ENCODE measurements at regions of chr11 and their contacts with region 1.

Region 1: DNA sequence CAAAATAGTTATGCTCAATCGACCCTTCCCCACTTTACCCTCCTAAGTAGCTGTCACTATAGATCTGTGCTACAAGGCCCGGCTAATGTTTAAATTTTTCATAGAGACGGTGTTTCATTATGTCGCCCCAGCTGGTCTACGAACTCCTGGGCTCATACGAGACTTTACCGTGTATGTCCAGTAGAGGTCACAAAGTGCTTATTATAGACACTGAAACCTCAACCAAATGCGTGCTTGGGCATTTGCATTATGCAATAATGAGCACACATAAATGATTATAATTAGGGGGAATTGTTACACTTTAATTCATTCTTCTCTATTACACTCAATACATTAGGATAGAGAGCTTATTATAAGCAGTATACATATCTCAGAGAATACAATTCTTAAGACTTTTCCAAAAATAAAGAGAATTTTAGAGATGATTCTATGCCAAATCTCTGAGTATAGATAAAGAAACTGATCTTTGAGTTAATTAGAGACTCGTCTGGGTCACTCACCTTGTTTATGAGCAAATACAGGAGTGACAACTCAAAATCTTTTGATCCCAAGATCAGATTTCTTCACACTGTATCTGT is 12.5 kb upstream of the MRPL16 start:
- DNase-seq: peak; percentile 37 to 62
- H3K4me3 ChIP-seq: no peak overlapping the region
- H3K27ac ChIP-seq: no peak overlapping the region
- H3K4me1 ChIP-seq: no peaks in the 10 kb centered on the region
- H3K27me3 ChIP-seq: no peaks in the 10 kb centered on the region
- CTCF ChIP-seq: peak; percentile 85

Region 2: DNA sequence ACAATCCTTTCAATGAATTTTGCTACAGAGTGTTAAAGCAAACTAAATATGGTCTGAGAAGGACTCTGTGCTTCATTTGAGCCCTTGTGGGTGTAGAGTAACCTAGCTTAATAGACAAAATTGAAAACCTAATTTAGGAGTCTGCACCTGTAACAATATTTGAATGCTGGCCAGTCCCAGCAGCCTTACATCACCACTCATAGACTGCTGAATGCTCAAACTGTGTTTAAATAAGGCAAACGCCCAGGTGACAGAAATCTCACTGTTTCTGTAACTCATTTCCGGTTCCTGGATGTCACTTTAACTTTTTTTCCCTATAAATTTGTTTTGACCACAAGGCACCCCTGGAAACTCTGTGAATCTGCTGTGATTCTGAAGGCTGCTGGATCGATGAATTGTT is 782.5 kb before region 1 on chr11:
- CTCF ChIA-PET with region 1: no interaction called
- POLR2A ChIA-PET with region 1: no interaction called
- intact Hi-C with region 1: loop called (anchors 5 kb)
- DNase-seq: no peak
- H3K4me3 ChIP-seq: no peak overlapping the region
- H3K27ac ChIP-seq: no peak overlapping the region
- H3K4me1 ChIP-seq: no peaks in the 10 kb centered on the region
- H3K27me3 ChIP-seq: peaks cover 24% of the 10 kb centered on the region
- CTCF ChIP-seq: no peak

Region 3: GRCh38 chr11:59746111-59746510 is 77.0 kb before region 1 on chr11:
- CTCF ChIA-PET with region 1: no interaction called
- POLR2A ChIA-PET with region 1: no interaction called
- intact Hi-C with region 1: no loop called
- DNase-seq: no peak
- H3K4me3 ChIP-seq: no peak overlapping the region
- H3K27ac ChIP-seq: no peak overlapping the region
- H3K4me1 ChIP-seq: no peaks in the 10 kb centered on the region
- H3K27me3 ChIP-seq: no peaks in the 10 kb centered on the region; the same call in 1 of the 2 replicates
- CTCF ChIP-seq: no peak

Region 4: GRCh38 chr11:59918987-59919589 is 96.0 kb after region 1 on chr11:
- CTCF ChIA-PET with region 1: interaction called, 11 read pairs
- POLR2A ChIA-PET with region 1: no interaction called
- intact Hi-C with region 1: loop called (anchors 1 kb)
- DNase-seq: peak; percentile 46 to 60
- H3K4me3 ChIP-seq: no peak overlapping the region
- H3K27ac ChIP-seq: no peak overlapping the region
- H3K4me1 ChIP-seq: no peaks in the 10 kb centered on the region
- H3K27me3 ChIP-seq: no peaks in the 10 kb centered on the region
- CTCF ChIP-seq: peak; percentile 78

Region 5: DNA sequence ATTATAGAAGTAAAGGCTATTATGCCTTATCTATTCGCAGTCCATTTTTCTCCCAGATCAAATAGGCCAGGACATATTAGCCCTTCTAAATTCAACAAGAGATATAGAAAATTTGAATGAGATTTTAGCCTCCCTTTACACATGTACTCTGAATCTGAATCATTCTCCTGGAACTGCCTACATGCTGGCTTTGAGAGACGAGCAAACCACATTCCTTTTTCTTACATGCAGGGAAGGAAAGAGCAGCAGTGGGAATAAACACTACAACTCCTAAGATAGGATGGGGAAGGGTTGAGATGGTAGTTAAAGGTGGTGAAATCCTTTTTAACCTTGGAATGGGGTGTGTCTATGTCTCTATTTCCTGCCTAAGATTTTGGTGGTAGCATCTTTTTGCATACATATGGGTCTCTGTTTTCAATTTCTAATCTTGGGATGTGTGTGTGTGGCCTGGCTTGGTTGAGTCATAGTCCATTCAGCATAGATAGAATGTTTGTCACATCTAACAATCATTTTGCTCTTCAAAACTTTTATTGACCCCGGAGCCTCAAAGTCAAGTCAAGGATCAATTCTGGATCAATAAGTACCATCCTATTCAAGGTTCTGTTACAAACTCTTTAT is 206.0 kb after region 1 on chr11:
- CTCF ChIA-PET with region 1: no interaction called
- POLR2A ChIA-PET with region 1: no interaction called
- intact Hi-C with region 1: loop called (anchors 10 kb)
- DNase-seq: no peak
- H3K4me3 ChIP-seq: no peak overlapping the region
- H3K27ac ChIP-seq: no peak overlapping the region
- H3K4me1 ChIP-seq: no peaks in the 10 kb centered on the region
- H3K27me3 ChIP-seq: peaks cover under 1% of the 10 kb centered on the region; the same call in 1 of the 2 replicates
- CTCF ChIP-seq: no peak

Region 6: DNA sequence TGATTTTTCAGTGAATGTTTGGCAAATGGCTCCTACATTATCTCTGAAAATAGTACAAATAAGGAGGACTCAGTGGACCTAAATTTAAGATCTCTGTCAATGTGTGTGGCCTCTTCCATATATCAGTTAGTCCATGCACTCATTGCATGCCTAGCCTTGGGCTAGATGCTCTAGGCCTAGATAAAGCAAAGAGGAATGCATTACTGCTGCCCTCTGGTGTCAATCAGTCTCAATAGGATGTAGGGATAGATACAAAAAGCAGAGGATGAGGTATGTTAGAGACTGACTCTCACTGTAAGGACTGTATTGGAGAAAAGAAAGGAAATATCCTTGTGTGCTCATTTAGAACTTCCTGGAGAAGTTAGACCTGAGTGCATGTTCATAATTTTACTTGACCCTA is 307.4 kb after region 1 on chr11:
- CTCF ChIA-PET with region 1: no interaction called
- POLR2A ChIA-PET with region 1: no interaction called
- intact Hi-C with region 1: loop called (anchors 1 kb)
- DNase-seq: peak in 1 of 2 experiments; percentile 45
- H3K4me3 ChIP-seq: no peak overlapping the region
- H3K27ac ChIP-seq: no peak overlapping the region
- H3K4me1 ChIP-seq: no peaks in the 10 kb centered on the region; the same call in 1 of the 2 replicates
- H3K27me3 ChIP-seq: no peaks in the 10 kb centered on the region
- CTCF ChIP-seq: peak; percentile 56

Region 7: DNA sequence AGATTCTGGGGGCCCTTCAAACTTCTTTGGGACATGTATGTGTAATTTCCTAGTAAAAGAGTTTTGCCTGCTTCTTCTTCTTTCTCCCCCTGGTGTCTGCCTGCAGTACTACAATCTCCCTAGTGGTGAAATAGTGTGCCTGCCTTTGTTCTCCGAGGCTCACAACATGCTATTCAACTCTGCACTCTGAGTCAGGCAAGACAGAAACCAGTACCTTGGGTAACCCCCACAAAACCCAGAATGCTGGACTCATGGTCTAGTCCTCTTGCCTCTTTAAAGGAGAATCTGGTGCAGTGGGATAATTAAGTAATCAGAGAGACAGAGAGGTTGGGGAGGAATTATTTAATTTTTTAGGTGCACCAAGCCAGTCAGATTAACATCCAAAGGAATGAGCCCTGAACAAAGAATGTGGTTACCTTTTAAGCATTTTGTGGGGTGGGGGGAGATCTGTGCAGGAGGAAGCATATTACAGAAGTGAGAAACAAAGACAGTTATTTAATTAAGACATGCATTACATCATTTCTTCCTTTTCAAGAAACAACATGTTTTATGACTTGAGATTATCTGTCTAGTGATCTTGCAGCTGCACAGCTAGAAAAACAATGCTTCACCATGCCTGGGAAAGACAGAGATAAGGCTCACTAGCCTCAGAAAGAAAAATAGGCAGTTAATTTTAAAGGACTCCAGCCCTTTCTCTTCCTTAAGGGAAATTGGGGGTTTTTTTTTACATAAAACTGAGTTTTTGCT is 370.8 kb after region 1 on chr11:
- CTCF ChIA-PET with region 1: no interaction called
- POLR2A ChIA-PET with region 1: no interaction called
- intact Hi-C with region 1: loop called (anchors 2 kb)
- DNase-seq: peak; percentile 43 to 51
- H3K4me3 ChIP-seq: no peak overlapping the region
- H3K27ac ChIP-seq: no peak overlapping the region
- H3K4me1 ChIP-seq: no peaks in the 10 kb centered on the region
- H3K27me3 ChIP-seq: no peaks in the 10 kb centered on the region
- CTCF ChIP-seq: peak; percentile 91

Region 8: GRCh38 chr11:60251485-60252212 is 428.6 kb after region 1 on chr11:
- CTCF ChIA-PET with region 1: no interaction called
- POLR2A ChIA-PET with region 1: no interaction called
- intact Hi-C with region 1: loop called (anchors 5 kb)
- DNase-seq: peak in 1 of 2 experiments; percentile 9
- H3K4me3 ChIP-seq: no peak overlapping the region
- H3K27ac ChIP-seq: no peak overlapping the region
- H3K4me1 ChIP-seq: no peaks in the 10 kb centered on the region
- H3K27me3 ChIP-seq: no peaks in the 10 kb centered on the region
- CTCF ChIP-seq: peak; percentile 74